ENCODE measurements at regions of chr22 and their contacts with region 1.

Region 1: GRCh38 chr22:39725351-39726035 is 154.9 kb downstream of the CACNA1I start:
- DNase-seq: no peak
- H3K4me3 ChIP-seq: no peak overlapping the region
- H3K27ac ChIP-seq: no peak overlapping the region
- H3K4me1 ChIP-seq: no peaks in the 10 kb centered on the region
- H3K27me3 ChIP-seq: peaks cover 54% of the 10 kb centered on the region
- CTCF ChIP-seq: no peak

Region 2: GRCh38 chr22:39690881-39691605 is 34.5 kb before region 1 on chr22:
- CTCF ChIA-PET with region 1: no interaction called
- POLR2A ChIA-PET with region 1: no interaction called
- intact Hi-C with region 1: no loop called
- DNase-seq: no peak
- H3K4me3 ChIP-seq: no peak overlapping the region
- H3K27ac ChIP-seq: no peak overlapping the region
- H3K4me1 ChIP-seq: 0 out of 2 replicates have a peak, but pooled peaks cover 4% of the 10 kb centered on the region
- H3K27me3 ChIP-seq: peaks cover 55% of the 10 kb centered on the region
- CTCF ChIP-seq: no peak

Region 3: DNA sequence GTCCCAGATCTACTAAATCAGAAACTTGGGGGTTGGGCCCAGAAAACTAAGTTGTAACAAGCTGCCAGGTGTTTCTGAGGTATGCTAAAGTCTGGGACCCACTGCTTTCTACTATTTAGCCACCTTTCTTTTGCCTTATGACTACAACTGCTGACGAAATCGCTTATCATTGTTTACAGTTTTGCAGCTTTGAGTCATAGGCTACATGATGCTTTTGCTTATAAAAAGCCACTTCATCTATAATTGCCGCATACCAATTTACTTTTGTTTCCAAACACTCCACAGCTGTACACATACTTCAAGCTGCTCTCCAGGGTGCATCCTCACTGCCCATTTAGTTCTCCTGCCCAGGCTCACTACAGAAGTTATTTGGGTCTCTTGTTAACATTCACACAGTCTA is 23.4 kb after region 1 on chr22:
- CTCF ChIA-PET with region 1: no interaction called
- POLR2A ChIA-PET with region 1: no interaction called
- intact Hi-C with region 1: no loop called
- DNase-seq: peak in 1 of 2 experiments; percentile 88
- H3K4me3 ChIP-seq: no peak overlapping the region
- H3K27ac ChIP-seq: no peak overlapping the region
- H3K4me1 ChIP-seq: peaks cover 12% of the 10 kb centered on the region
- H3K27me3 ChIP-seq: peaks cover 36% of the 10 kb centered on the region
- CTCF ChIP-seq: no peak

Region 4: DNA sequence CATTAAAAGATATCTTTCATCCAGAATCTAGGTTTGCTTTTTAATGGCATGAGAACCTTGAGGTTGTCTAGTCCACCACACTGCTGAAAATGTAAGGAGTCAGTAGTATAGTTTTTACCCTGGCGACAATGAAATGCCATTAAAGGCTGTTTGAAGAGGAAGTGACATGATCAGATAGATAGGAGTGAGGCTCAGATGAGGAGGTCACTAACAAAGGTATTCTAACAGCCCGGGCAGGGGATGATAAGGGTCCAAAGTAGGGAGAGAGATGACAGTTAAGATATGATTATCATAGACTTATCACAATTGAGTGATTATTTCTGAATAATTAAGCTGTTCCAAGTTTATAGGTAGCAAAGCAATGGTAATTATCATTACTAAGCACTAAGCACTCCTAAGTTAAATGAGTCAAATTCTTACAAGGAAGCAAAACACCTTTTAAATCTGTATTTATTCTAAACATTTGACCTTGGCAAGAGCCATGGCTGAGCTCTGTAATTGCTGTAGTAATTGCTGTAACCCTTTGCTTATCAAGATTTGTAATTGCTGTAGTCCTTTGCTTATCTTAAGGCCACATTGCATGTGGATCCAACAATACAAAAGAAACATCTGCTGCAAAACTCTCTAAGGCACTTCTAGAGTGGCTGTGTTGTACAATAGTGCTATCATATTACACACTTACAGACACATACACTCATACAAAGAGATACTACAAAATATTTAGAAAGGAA is 75.5 kb after region 1 on chr22:
- CTCF ChIA-PET with region 1: no interaction called
- POLR2A ChIA-PET with region 1: interaction called, 12 read pairs
- intact Hi-C with region 1: no loop called
- DNase-seq: no peak
- H3K4me3 ChIP-seq: no peak overlapping the region
- H3K27ac ChIP-seq: no peak overlapping the region
- H3K4me1 ChIP-seq: no peaks in the 10 kb centered on the region
- H3K27me3 ChIP-seq: peaks cover 37% of the 10 kb centered on the region
- CTCF ChIP-seq: no peak

Measured in PC-9 (cell line).